Sigmoid colon (tissue), 7 donors: ENCODE measurements at regions of chr5 and their contacts with region 1.

Region 1: GRCh38 chr5:1641560-1642166 is 117.9 kb upstream of the LPCAT1 start:
- DNase-seq: peak; percentile 90
- H3K4me3 ChIP-seq: no peak overlapping the region
- H3K27ac ChIP-seq: no peak overlapping the region
- H3K4me1 ChIP-seq: peaks cover 0 to 15% (median 7%) of the 10 kb centered on the region in 4 donors
- H3K27me3 ChIP-seq: peaks cover 12 to 29% (median 16%) of the 10 kb centered on the region in 3 donors
- CTCF ChIP-seq: peak; percentile 71 to 86 (median 78)
- EP300 ChIP-seq: no peak
- POLR2A ChIP-seq: no peak

Region 2: DNA sequence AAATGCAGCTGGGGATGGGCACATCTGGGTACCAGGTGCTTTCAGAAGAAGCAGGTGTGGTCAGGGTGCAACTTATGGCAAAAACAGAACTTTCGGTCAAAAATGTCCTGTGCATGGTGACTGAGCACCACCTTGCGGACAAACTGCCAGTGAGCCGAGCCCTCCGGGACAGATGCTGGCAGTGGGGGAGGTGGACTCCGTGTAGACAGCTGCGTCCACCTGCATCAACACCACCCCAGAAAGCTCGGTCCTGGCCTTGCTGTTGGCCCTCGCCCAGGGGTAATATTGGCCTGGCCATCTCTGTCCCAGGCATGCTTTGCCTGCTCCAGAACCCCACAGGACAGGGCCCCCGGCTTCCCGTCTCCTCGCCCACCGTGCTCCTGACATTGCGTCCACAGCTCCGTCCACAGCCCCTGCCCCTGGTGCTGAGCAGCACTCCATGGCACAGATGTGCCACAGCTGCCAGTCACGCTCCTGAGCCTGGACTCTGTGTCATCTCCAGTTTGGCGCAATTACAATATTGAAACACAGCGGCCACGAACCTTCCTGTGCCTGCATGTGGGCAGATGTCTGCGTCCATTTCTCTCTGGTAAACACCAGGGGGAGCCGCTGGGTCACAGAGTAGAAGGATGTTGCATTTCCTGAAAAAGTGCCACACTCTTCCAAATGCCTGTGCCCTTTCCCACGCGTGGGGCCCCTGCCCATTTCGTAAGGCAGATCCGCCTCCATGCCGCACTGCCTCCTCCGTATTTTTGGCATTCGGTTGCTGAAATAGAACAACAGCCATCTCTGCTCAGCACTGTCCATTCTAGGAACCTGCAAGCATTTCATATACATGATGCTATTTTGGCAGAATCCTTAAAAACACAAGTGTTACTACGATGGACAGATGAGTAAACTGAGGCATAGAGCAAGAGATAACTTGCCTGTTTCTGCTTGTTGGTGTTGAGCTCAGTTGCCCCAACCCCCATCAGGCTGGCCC is 473.6 kb before region 1 on chr5:
- intact Hi-C with region 1: loop called (anchors 2 kb)
- DNase-seq: peak; percentile 80
- H3K4me3 ChIP-seq: peak overlapping the region in 1 of 4 donors; percentile 20
- H3K27ac ChIP-seq: no peak overlapping the region
- H3K4me1 ChIP-seq: peaks cover 0 to 11% (median 2%) of the 10 kb centered on the region in 4 donors
- H3K27me3 ChIP-seq: peaks cover 0 to 15% (median 0%) of the 10 kb centered on the region in 3 donors
- CTCF ChIP-seq: peak in 3 of 4 experiments; percentile 51 to 75 (median 63)
- EP300 ChIP-seq: no peak
- POLR2A ChIP-seq: no peak

Region 3: GRCh38 chr5:1385395-1386273 is 256.0 kb before region 1 on chr5:
- intact Hi-C with region 1: loop called (anchors 2 kb)
- DNase-seq: peak; percentile 91
- H3K4me3 ChIP-seq: peak overlapping the region; percentile 49 to 64 (median 60)
- H3K27ac ChIP-seq: peak overlapping the region; percentile 28 to 60 (median 58)
- H3K4me1 ChIP-seq: peaks cover 0 to 19% (median 12%) of the 10 kb centered on the region in 4 donors
- H3K27me3 ChIP-seq: peaks cover under 1 to 37% (median 4%) of the 10 kb centered on the region in 3 donors
- CTCF ChIP-seq: no peak
- EP300 ChIP-seq: no peak
- POLR2A ChIP-seq: peak in 1 of 2 donors; percentile 33

Region 4: DNA sequence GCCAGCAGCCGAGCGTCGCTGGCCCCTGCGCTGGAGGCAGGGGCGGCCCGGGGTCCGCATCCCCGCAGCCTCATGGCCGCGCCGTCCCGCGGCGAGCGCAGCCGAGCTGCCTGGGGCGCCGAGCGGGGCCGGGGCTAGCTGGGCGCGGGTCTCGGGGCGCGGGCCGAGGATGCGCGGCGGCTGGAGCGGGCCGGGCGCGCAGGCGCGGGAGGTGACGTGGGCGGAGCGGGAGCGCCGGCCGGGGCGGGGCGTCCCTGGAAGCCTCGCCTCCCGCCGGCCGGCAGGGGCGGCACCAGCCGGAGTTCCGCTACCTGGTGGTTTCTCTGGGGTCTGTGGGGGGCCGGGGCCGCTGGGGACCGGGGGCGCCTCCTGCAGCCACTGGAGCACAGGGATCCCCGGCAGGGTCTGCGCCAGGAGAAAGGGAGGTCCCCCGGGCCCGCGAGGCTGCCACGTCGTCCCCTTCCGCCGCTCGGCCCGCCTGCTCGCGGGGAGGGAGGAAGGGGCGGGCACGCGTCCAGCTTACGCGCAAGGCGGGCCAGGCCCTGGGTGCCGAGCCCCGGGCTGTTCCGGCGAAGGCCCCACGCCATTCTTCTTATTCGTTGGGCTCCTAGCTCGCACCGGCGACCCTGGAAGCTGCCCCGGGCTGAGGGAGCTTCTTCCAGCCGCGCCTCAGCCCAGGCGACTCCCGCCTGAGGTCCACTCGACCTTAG is 117.7 kb before region 1 on chr5 and contains the start of gene LPCAT1:
- intact Hi-C with region 1: loop called (anchors 2 kb)
- DNase-seq: peak; percentile 89
- H3K4me3 ChIP-seq: peak within 1 kb of the TSS; percentile 82 to 87 (median 84)
- H3K27ac ChIP-seq: peak within 1 kb of the TSS; percentile 86 to 93 (median 92)
- H3K4me1 ChIP-seq: peaks cover 0 to 25% (median 21%) of the 10 kb centered on the region in 4 donors
- H3K27me3 ChIP-seq: no peaks in the 10 kb centered on the region
- CTCF ChIP-seq: peak in 1 of 4 experiments; percentile 22
- EP300 ChIP-seq: no peak
- POLR2A ChIP-seq: no peak
- total RNA-seq, gene LPCAT1: 20.6 to 24.3 (median 22.3) TPM